A549 (cell line): ENCODE measurements at regions of chr14 and their contacts with region 1.

Region 1: DNA sequence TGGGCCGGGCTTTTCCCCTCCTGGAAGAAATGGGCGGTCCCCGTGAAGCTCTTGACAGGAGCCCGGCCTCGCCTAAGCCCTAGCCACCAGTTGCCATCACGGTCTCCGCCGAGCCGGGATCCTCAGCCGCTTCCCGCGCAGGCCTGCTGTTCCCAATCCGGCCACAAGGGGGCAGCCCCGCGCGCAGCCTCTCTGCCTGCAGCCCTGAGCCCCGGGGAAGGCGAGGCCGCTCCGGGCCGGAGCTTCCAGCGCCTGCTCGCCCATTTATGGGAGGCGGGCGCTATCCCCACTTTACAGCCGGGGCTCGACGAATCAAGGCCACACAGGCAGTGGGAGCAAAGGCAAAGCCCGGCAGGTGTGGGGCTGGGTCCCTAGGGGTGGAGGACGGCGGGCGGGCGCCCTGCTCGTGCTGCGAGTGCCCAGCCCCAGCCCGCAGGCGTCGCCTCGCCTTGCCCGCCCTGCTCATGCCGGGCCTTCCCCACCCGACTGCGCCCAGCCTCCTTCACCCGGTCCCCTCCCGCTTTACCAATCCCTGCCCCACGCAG is 61.5 kb downstream of the LGMN start:
- DNase-seq: peak; percentile 74 to 91
- ATAC-seq: peak; percentile 81 to 94
- H3K4me3 ChIP-seq: no peak overlapping the region
- H3K27ac ChIP-seq: peak overlapping the region in 1 of 2 experiments; percentile 69; a peak in 3 of 6 replicates
- H3K4me1 ChIP-seq: 0 out of 3 replicates have a peak, but pooled peaks cover 4% of the 10 kb centered on the region
- CTCF ChIP-seq: peak; percentile 77
- EP300 ChIP-seq: no peak
- POLR2A ChIP-seq: no peak
- RAD21 ChIP-seq: peak; percentile 68 to 73

Region 2: DNA sequence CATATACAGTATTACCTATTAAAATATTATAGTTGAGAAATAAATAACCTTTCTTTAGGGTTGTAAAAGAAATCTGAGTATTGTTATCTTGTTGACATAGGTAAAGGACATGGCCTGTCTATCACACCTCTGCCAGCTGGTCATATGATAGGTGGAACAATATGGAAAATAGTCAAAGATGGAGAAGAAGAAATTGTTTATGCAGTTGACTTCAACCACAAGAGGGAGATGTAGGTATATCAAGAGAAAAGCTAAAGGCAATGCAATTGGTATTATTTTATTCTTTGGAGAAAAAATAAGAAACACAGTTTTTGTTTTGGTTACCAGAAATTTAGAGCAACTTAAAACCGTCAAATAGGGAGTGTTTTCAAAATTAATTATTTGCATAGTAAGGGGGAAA is 551.7 kb before region 1 on chr14:
- CTCF ChIA-PET with region 1: interaction called, 16 read pairs
- POLR2A ChIA-PET with region 1: no interaction called
- DNase-seq: peak; percentile 11 to 59
- ATAC-seq: peak; percentile 56 to 66; a peak in 4 of 6 replicates
- H3K4me3 ChIP-seq: no peak overlapping the region
- H3K27ac ChIP-seq: no peak overlapping the region
- H3K4me1 ChIP-seq: no peaks in the 10 kb centered on the region
- CTCF ChIP-seq: peak; percentile 75
- EP300 ChIP-seq: no peak
- POLR2A ChIP-seq: no peak
- RAD21 ChIP-seq: peak; percentile 70

Region 3: GRCh38 chr14:92675421-92675820 is 11.6 kb before region 1 on chr14:
- CTCF ChIA-PET with region 1: interaction called, 33 read pairs
- POLR2A ChIA-PET with region 1: no interaction called
- DNase-seq: no peak
- ATAC-seq: no peak
- H3K4me3 ChIP-seq: no peak overlapping the region
- H3K27ac ChIP-seq: no peak overlapping the region
- H3K4me1 ChIP-seq: no peaks in the 10 kb centered on the region
- CTCF ChIP-seq: no peak
- EP300 ChIP-seq: no peak
- POLR2A ChIP-seq: no peak
- RAD21 ChIP-seq: no peak

Region 4: DNA sequence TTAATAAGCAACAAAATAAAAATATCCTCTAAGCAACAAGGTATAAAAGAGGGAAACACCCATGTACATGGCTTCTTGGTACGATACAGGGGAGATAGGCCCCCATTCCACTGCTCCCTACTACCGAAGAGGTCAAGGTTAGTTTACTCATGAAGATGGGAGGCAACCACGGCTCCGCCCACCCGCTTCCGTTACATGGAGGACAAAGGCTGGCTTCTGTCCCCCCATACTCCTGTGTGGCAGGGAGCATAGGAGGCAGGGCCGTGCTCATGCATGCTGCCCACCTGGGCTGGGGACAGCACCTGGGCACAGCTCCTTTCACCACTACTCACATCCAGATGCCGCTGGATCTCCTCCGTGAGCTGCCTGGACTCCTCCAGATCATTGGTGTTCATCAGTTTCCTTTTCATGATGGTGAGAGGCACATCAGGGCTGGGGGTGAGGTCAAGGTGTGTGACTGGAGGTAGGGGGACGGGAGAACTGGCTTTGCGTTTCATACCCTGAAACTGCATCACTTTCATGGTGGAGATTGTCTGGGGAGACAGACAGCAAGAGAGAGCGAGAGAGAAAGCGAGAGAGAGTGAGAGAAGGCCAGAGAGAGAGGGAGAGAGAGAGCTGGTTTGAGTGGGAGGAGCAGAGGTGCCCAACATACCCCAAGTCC is 22.5 kb after region 1 on chr14:
- CTCF ChIA-PET with region 1: interaction called, 19 read pairs
- POLR2A ChIA-PET with region 1: no interaction called
- DNase-seq: no peak
- ATAC-seq: no peak
- H3K4me3 ChIP-seq: no peak overlapping the region
- H3K27ac ChIP-seq: peak overlapping the region in 1 of 2 experiments; percentile 54; a peak in 1 of 6 replicates
- H3K4me1 ChIP-seq: peaks cover 8% of the 10 kb centered on the region; the same call in 2 of the 3 replicates
- CTCF ChIP-seq: no peak
- EP300 ChIP-seq: no peak
- POLR2A ChIP-seq: no peak
- RAD21 ChIP-seq: no peak

Region 5: DNA sequence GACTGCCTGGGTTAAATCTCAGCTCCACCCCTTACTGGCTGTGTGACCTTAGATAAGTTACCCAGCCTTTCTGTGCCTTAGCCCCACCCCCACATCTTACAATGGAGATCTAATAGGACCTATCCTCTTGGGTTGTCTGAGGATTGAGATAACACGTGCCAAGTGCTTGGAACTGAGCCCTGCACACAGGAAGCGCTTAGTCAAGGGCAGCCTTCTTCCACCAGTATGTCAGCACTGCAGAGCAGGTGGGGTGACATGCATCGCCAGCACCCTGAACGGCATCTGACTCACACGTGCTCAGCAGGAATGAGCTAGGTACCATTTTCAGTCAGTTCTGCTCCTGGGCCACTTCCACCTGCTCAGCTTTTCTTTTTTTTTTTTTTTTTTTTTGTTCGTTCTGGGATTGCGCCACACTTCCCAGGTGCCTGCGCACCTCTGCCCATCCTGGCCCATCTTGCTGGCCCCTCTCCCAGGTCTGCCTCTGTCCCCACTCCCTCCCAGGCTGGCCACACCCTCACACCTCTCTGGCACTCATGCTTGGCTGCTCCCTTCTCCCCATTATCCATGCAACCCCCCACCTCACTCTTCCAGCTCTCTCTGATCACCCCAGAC is 41.9 kb after region 1 on chr14:
- CTCF ChIA-PET with region 1: interaction called, 10 read pairs
- POLR2A ChIA-PET with region 1: no interaction called
- DNase-seq: peak in 1 of 2 experiments; percentile 28
- ATAC-seq: no peak
- H3K4me3 ChIP-seq: no peak overlapping the region
- H3K27ac ChIP-seq: peak overlapping the region in 1 of 2 experiments; percentile 73; a peak in 3 of 6 replicates
- H3K4me1 ChIP-seq: peaks cover 52% of the 10 kb centered on the region
- CTCF ChIP-seq: no peak
- EP300 ChIP-seq: no peak
- POLR2A ChIP-seq: no peak
- RAD21 ChIP-seq: no peak

Region 6: GRCh38 chr14:92783816-92784431 is 97.0 kb after region 1 on chr14:
- CTCF ChIA-PET with region 1: interaction called, 191 read pairs
- POLR2A ChIA-PET with region 1: interaction called, 3 read pairs
- DNase-seq: peak; percentile 69 to 70
- ATAC-seq: peak; percentile 75 to 88; a peak in 5 of 6 replicates
- H3K4me3 ChIP-seq: no peak overlapping the region
- H3K27ac ChIP-seq: 0 out of 6 replicates have a peak overlapping the region, but pooled peaks of 1 of the 2 experiments have one; percentile 29
- H3K4me1 ChIP-seq: peaks cover 14% of the 10 kb centered on the region; the same call in 2 of the 3 replicates
- CTCF ChIP-seq: peak; percentile 82
- EP300 ChIP-seq: no peak
- POLR2A ChIP-seq: no peak
- RAD21 ChIP-seq: peak; percentile 84 to 86